Transverse colon (tissue), 4 donors: ENCODE measurements at regions of chr11 and their contacts with region 1.

Region 1: DNA sequence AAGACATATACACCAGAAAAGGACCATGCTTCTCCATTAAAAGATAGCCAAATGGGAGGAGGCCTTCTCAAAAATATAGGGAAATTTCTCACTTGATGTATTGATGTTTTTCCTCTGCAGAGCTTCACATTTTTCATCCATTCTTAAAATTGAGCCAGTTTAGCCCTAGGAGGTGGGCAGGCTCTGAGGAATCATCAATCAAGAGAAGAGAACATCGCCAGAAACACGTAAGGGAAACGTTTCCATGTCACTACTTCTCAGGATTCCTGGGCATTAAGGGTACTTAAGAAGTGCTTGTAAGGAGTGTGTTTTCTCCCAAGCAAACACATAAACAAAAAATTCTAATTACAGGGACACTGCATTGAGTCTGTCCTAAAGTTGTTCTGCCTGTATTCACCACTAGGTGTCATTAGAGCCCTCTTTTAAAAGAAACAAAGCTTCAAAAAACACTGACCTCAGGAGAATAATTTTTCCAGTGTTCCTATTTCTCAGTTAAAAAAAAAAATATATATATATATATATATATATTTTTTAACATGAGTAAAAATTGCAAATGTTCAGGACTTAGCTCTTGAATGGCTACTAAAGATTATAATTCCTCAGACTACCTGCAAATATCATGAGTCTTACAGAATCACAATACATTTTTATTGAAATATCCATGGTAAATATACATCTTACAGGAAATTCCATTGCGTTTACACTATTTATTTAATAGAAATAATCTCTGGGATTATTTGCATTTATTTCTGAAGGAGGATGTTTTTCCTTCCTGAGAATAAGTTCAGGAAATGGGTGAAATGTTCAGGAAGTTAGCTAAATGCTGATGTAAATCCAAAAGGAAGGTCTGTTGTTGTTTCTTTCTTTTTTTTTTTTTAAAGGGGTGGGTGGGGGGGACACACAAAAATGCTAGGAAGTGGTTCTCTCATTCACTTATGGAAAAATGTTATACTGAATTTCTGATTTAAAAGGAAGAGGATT is 16.0 kb downstream of the FZD4 start:
- DNase-seq: no peak
- H3K4me3 ChIP-seq: no peak overlapping the region
- H3K27ac ChIP-seq: peak overlapping the region; percentile 60 to 81 (median 72)
- H3K4me1 ChIP-seq: peaks cover 17 to 57% (median 26%) of the 10 kb centered on the region in 4 donors
- H3K27me3 ChIP-seq: no peaks in the 10 kb centered on the region
- CTCF ChIP-seq: peak; percentile 62 to 83 (median 76)
- EP300 ChIP-seq: no peak
- POLR2A ChIP-seq: no peak

Region 2: DNA sequence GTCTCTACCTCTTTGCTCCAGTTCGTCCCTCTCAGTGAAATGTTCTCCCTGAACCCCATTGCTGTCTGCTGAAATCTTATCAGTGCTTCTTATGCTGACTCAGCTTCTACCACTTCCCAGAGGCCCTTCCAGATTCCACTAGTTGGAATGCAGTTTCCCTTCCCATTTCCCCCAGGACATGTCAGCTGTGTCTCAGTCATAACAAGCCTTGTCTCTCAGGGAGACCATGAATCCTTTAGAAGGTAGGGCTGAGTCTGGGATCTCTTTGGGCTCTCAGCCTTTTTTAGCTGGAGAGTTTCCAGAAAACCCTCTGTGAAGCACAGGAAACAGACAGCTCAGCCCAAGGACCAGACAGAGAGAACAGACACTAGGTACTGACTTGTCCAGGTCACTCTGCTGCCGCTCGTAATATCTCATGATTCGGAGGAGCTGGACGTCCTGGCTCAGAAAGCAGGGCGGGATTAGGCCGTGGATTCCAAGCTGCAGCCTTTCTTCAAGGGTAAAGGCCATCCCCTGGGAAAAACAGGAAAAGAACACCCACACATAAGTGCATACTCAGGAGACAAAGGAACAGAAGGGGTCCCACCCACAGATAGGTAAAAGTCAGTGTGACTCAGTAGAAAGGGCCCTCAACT is 379.8 kb before region 1 on chr11:
- in situ Hi-C with region 1: no loop called
- intact Hi-C with region 1: no loop called
- DNase-seq: no peak
- H3K4me3 ChIP-seq: no peak overlapping the region
- H3K27ac ChIP-seq: peak overlapping the region; percentile 37 to 60 (median 42)
- H3K4me1 ChIP-seq: peaks cover 0 to 16% (median 9%) of the 10 kb centered on the region in 4 donors
- H3K27me3 ChIP-seq: no peaks in the 10 kb centered on the region
- CTCF ChIP-seq: no peak
- EP300 ChIP-seq: no peak
- POLR2A ChIP-seq: no peak

Region 3: DNA sequence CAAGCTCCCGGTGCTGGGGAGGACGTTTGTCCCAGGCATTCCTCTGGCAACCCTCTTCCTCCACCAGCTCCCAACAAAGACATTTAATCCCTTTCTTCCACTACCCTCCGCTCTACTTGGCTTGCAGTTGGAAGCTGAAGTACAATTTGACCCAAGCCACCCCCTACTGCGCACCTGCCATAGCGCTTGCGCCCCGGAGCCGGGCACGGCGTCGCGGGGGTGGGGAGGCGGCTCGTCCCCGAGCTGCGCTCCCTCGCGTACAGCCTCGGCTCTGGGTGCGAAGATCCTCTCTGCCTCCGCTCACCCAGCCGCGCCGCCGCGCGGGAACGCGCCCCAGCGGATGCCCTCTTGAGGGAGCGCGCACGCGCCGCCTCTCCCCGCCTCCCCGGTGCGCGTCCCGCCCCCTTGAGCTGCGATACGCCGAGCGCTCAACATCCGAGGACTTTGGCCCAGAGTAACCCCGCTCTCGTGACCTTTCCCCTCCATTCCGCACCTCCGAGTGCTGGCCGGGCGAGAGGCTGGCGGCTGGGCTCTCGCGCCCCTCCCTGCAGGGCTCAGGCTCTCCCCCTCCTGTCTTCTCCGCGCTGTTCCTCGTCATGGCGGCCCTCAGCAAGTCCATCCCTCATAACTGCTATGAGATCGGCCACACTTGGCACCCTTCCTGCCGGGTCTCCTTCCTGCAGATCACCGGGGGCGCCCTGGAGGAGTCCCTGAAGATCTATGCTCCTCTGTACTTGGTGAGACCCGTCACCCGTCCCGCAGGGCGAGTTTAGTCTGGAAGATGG is 98.5 kb after region 1 on chr11 and contains the start of gene TMEM135:
- in situ Hi-C with region 1: no loop called
- intact Hi-C with region 1: loop called (anchors 5 kb)
- DNase-seq: peak; percentile 98
- H3K4me3 ChIP-seq: peak within 1 kb of the TSS; percentile 71 to 85 (median 79)
- H3K27ac ChIP-seq: peak within 1 kb of the TSS; percentile 89 to 93 (median 91)
- H3K4me1 ChIP-seq: peaks cover 4 to 34% (median 14%) of the 10 kb centered on the region in 4 donors
- H3K27me3 ChIP-seq: no peaks in the 10 kb centered on the region
- CTCF ChIP-seq: no peak
- EP300 ChIP-seq: no peak
- POLR2A ChIP-seq: peak; percentile 75
- total RNA-seq, gene TMEM135: 13.1 to 123 (median 19.1) TPM

Region 4: GRCh38 chr11:87281496-87281895 is 342.3 kb after region 1 on chr11:
- in situ Hi-C with region 1: loop called in 2 of 4 experiments (anchors 10 kb)
- intact Hi-C with region 1: loop called (anchors 2 kb)
- DNase-seq: no peak
- H3K4me3 ChIP-seq: no peak overlapping the region
- H3K27ac ChIP-seq: no peak overlapping the region
- H3K4me1 ChIP-seq: peaks cover 0 to 12% (median 2%) of the 10 kb centered on the region in 4 donors
- H3K27me3 ChIP-seq: no peaks in the 10 kb centered on the region
- CTCF ChIP-seq: peak in 2 of 5 experiments; percentile 6 to 15
- EP300 ChIP-seq: no peak
- POLR2A ChIP-seq: no peak

Region 5: GRCh38 chr11:87300640-87301380 is 361.6 kb after region 1 on chr11:
- in situ Hi-C with region 1: loop called in 2 of 4 experiments (anchors 10 kb)
- intact Hi-C with region 1: no loop called
- DNase-seq: peak; percentile 25
- H3K4me3 ChIP-seq: no peak overlapping the region
- H3K27ac ChIP-seq: peak overlapping the region; percentile 27 to 67 (median 49)
- H3K4me1 ChIP-seq: peaks cover 0 to 39% (median 12%) of the 10 kb centered on the region in 4 donors
- H3K27me3 ChIP-seq: no peaks in the 10 kb centered on the region
- CTCF ChIP-seq: no peak
- EP300 ChIP-seq: no peak
- POLR2A ChIP-seq: no peak